ENCODE measurements at regions of chr12 and their contacts with region 1.

Region 1: GRCh38 chr12:94101738-94102660 is 46.4 kb upstream of the PLXNC1 start:
- DNase-seq: peak; percentile 59 to 90 (median 82)
- ATAC-seq: peak; percentile 86 to 90
- H3K4me3 Mint-ChIP-seq: peak overlapping the region; percentile 83 to 92 (median 88)
- H3K27ac Mint-ChIP-seq: peak overlapping the region in 9 of 10 donors; percentile 30 to 89 (median 77)
- H3K4me1 Mint-ChIP-seq: peaks cover 4 to 20% (median 11%) of the 10 kb centered on the region in 4 donors
- H3K27me3 Mint-ChIP-seq: peaks cover 5 to 23% (median 17%) of the 10 kb centered on the region in 5 donors

Region 2: GRCh38 chr12:93502802-93503623 is 599.0 kb before region 1 on chr12:
- POLR2A ChIA-PET with region 1: interaction called, 10 read pairs
- DNase-seq: peak; percentile 28 to 81 (median 61)
- ATAC-seq: peak in 1 of 2 donors; percentile 57
- H3K4me3 Mint-ChIP-seq: no peak overlapping the region
- H3K27ac Mint-ChIP-seq: peak overlapping the region in 2 of 10 donors; percentile 32 to 66
- H3K4me1 Mint-ChIP-seq: peaks cover 0 to 5% (median 0%) of the 10 kb centered on the region in 4 donors
- H3K27me3 Mint-ChIP-seq: no peaks in the 10 kb centered on the region

Region 3: DNA sequence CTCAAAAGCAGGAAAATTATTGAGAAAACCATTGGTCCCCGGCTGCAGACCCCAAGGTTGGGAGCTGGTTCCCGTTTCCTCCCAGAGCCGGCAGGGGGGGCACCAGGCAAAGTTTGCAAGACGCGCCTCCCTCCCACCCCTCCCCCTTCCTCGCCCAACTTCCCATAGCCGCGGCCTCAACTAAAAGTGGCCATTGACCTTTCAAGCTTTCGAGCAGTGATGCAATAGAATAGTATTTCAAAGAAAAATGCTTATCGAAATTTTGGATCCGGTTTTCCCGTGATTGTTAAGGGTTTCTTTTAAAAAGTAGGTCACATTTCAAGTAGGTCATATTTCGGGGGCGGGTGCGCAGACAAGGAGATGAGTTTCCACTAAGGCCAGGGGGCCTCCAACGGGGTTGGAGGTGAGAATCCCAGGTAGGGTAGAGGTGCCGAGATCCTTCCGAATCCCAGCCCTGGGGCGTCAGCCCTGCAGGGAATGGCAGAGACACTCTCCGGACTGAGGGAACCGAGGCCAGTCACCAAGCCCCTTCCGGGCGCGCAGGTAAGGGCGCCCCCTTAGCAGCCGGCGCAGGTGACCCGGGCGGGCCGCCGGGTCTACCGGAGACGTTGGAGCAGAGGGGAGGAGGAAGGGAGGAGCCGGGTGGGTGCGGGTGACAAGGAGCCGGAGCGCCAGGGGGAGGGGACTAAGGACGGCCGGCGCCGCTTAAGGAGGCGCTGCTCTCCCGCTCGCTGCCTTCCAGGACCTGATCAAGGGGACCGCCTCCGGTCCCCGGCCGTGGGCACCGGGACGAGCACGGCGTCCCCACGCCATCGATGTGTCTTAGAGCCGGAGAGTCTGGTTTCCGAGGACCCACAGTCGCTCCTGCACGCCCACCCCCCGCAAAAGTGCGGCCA is 532.1 kb before region 1 on chr12:
- POLR2A ChIA-PET with region 1: interaction called, 17 read pairs
- DNase-seq: peak; percentile 60 to 83 (median 70)
- ATAC-seq: peak; percentile 54
- H3K4me3 Mint-ChIP-seq: peak overlapping the region; percentile 89 to 93 (median 90)
- H3K27ac Mint-ChIP-seq: peak overlapping the region in 8 of 10 donors; percentile 72 to 94 (median 90)
- H3K4me1 Mint-ChIP-seq: peaks cover 18 to 34% (median 27%) of the 10 kb centered on the region in 4 donors
- H3K27me3 Mint-ChIP-seq: peaks cover 0 to 9% (median 0%) of the 10 kb centered on the region in 5 donors

Measured in naive thymus-derived CD8-positive, alpha-beta T cell (primary cell).